ENCODE measurements at regions of chr10 and their contacts with region 1.

Region 1: DNA sequence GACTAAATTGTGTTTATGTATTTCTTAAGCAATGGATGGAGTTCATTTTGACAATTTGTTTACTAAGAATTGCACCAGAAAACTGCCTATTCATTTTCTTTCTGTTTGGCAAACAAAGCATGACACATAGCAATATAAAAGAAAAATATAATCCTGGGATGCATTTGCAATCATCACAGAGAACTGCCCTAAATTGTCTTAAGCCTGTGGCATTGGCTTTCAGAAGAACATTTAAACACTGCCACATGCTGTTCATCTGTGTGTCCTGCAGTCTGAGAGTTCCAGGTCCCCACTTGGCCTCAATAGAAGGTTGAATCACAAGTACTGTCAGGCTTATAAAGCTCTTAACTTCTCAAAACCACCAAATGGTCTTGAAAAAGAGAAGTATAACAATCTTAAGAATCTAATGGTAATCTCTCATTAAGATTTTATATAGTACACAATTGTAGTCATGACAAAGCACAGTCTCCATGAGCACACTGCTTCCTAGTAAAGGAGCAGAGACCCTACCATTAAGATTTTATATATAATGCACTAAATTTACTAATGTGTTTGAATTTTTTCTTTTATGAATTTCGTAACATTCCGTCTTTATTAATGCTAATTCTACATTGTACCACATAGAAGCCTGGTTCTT is 29.9 kb downstream of the RNLS start:
- DNase-seq: peak; percentile 61
- H3K4me3 ChIP-seq: no peak overlapping the region
- H3K27ac ChIP-seq: no peak overlapping the region
- H3K27me3 ChIP-seq: no peaks in the 10 kb centered on the region
- CTCF ChIP-seq: peak; percentile 85

Region 2: GRCh38 chr10:87850742-87851205 is 702.5 kb before region 1 on chr10:
- CTCF ChIA-PET with region 1: interaction called, 18 read pairs
- POLR2A ChIA-PET with region 1: no interaction called
- DNase-seq: no peak
- H3K4me3 ChIP-seq: no peak overlapping the region
- H3K27ac ChIP-seq: no peak overlapping the region
- H3K27me3 ChIP-seq: no peaks in the 10 kb centered on the region
- CTCF ChIP-seq: peak; percentile 71

Region 3: GRCh38 chr10:88522715-88523114 is 30.5 kb before region 1 on chr10:
- CTCF ChIA-PET with region 1: interaction called, 11 read pairs
- POLR2A ChIA-PET with region 1: interaction called, 3 read pairs
- DNase-seq: no peak
- H3K4me3 ChIP-seq: no peak overlapping the region
- H3K27ac ChIP-seq: no peak overlapping the region
- H3K27me3 ChIP-seq: no peaks in the 10 kb centered on the region
- CTCF ChIP-seq: no peak

Region 4: DNA sequence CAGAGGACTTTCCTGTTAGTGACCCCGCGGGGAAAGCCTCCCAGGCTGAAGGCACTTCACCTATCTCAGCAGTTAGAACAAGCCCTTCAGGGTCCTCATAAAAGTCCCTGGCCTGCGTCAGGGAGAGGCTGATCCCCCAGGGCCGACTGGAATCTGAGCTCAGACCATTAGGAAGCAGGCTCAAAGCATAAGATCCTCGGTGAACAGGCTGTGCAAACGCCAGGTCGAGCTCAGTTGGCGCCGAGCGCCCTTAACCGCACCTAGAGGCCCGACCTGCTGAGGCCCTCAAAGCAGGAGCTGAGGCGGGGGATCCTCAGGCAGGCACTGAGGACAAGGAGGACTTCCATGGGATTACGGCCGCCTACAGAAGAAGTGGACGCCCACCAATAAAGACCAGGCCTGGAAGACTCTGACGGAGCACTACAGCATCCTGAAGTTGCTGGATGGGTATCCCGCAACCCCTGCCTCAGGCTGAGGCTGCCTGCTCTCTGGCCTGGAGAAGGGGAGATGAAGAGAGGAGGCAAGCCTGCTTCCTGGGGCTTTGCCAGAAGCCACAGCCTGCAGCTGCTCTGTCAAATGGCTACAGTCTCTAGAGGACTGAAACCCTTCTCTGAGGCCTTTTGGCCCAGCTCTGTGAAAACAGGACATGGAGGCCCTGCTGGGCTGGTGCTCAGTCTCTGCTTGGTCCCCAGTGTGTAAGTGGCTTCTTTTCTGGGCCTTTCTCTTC is 63.2 kb after region 1 on chr10:
- CTCF ChIA-PET with region 1: no interaction called
- POLR2A ChIA-PET with region 1: interaction called, 11 read pairs
- DNase-seq: no peak
- H3K4me3 ChIP-seq: no peak overlapping the region
- H3K27ac ChIP-seq: no peak overlapping the region
- H3K27me3 ChIP-seq: no peaks in the 10 kb centered on the region
- CTCF ChIP-seq: no peak

Region 5: DNA sequence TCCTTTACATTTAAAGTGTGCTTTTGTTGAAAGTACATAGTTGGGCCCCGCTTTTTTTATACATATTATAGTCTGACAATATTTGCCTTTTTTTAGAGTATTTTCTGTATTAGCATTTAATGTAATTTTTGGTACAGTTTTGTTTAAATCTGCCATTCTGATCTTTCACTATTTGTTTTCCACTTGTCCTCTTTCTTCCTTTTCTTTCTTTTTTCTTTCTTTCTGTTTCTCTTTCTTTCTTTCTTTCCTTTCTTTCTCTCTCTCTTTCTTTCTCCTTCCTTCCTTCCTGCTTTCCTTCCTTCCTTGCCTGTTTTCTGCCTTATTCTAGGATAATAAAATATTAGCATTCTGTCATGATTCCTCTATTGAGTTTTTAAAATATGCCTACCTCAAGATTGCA is 162.3 kb after region 1 on chr10:
- CTCF ChIA-PET with region 1: no interaction called
- POLR2A ChIA-PET with region 1: no interaction called
- DNase-seq: no peak
- H3K4me3 ChIP-seq: no peak overlapping the region
- H3K27ac ChIP-seq: no peak overlapping the region
- H3K27me3 ChIP-seq: no peaks in the 10 kb centered on the region
- CTCF ChIP-seq: no peak

Region 6: DNA sequence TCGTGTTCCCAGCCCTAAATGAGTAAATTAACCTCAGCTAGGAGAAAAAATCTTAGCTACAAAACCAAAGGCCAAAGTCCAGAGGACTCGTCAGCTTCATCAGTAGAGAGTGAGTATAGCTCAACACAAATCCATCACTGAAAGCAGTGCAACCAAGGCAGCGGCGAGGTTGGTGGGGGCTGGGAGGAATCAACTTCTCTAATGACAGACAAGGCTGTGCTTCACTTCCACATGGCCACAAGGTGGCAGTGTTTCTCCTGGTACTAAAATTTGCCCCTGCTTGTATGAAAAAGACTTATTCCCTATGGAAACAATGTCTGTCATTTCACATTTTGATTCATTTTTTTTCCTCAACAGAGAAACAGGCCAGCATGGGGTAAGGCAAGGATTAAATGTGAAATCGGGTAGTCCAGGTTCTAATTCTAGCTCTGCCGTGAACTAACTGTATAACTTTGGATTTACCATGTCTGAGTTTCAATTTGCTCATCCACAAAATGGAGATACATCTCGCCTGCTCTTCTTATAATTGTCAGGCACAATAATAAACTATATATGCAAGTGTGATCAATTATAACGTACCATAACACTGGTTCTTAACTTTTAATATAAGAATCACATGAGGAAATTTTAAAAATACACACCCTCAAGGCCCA is 476.7 kb after region 1 on chr10:
- CTCF ChIA-PET with region 1: no interaction called
- POLR2A ChIA-PET with region 1: no interaction called
- DNase-seq: peak; percentile 59
- H3K4me3 ChIP-seq: no peak overlapping the region
- H3K27ac ChIP-seq: no peak overlapping the region
- H3K27me3 ChIP-seq: no peaks in the 10 kb centered on the region
- CTCF ChIP-seq: peak; percentile 85